ENCODE measurements at regions of chr4 and their contacts with region 1.

Region 1: DNA sequence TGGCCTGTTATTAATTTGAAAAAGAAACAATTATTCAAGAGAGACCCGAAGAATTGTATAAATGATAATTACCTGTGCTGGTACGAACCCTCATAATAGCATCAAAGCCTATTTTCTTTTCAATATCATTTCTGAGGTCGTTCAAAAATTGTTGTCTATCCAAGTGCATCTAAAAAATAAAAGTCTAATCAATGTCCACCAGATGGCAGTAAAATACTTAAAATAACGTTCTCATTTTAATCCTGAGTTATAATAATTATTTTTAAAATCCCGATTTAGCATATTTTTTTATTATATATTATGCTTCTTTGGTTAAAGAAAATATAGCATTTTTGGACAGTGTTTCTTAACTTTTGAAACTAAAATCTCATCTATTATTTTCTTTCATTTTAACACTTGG is 55.7 kb downstream of the METTL14 start:
- DNase-seq: no peak
- H3K4me3 ChIP-seq: no peak overlapping the region
- H3K27ac ChIP-seq: no peak overlapping the region
- H3K4me1 ChIP-seq: peaks cover 3% of the 10 kb centered on the region
- H3K27me3 ChIP-seq: no peaks in the 10 kb centered on the region
- CTCF ChIP-seq: peak in 3 of 4 experiments; percentile 54 to 66 (median 58)
- POLR2A ChIP-seq: no peak

Region 2: DNA sequence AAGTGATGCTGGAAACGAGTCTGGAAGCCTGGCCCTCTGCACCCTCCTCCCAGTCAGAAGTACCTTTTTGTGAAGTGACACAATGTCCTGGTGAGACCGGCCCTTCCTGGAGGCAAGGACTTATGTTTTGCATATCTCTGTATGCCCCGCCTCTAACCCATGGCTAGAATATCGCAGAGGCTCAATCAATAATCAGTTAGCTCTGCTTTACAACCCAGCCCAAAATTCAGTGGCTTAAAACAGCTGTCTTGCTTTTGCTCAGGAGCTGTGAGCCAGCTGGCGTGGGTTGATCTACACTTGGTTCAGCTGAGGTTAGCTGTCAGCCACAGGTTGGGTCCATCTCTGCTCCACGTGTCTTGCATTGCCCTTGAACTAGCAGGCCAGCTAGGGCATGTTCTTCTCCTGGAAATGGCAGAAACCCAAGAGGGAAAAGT is 154.5 kb before region 1 on chr4:
- intact Hi-C with region 1: no loop called
- DNase-seq: no peak
- H3K4me3 ChIP-seq: no peak overlapping the region
- H3K27ac ChIP-seq: no peak overlapping the region
- H3K4me1 ChIP-seq: no peaks in the 10 kb centered on the region
- H3K27me3 ChIP-seq: no peaks in the 10 kb centered on the region
- CTCF ChIP-seq: no peak
- POLR2A ChIP-seq: no peak

Region 3: GRCh38 chr4:118888666-118889311 is 147.9 kb after region 1 on chr4 and contains the start of gene SYNPO2:
- intact Hi-C with region 1: loop called (anchors 2 kb)
- DNase-seq: peak; percentile 79
- H3K4me3 ChIP-seq: peak within 1 kb of the TSS; percentile 26 to 37
- H3K27ac ChIP-seq: peak within 1 kb of the TSS; percentile 41 to 78
- H3K4me1 ChIP-seq: no peaks in the 10 kb centered on the region
- H3K27me3 ChIP-seq: no peaks in the 10 kb centered on the region
- CTCF ChIP-seq: peak in 1 of 4 experiments; percentile 1
- POLR2A ChIP-seq: peak; percentile 76
- total RNA-seq, gene SYNPO2: 131 to 181 TPM

Region 4: GRCh38 chr4:119286377-119287002 is 545.6 kb after region 1 on chr4:
- intact Hi-C with region 1: loop called (anchors 5 kb)
- DNase-seq: peak; percentile 25
- H3K4me3 ChIP-seq: no peak overlapping the region
- H3K27ac ChIP-seq: no peak overlapping the region
- H3K4me1 ChIP-seq: no peaks in the 10 kb centered on the region
- H3K27me3 ChIP-seq: no peaks in the 10 kb centered on the region
- CTCF ChIP-seq: peak in 3 of 4 experiments; percentile 52 to 80 (median 68)
- POLR2A ChIP-seq: no peak